ENCODE measurements at regions of chr14 and their contacts with region 1.

Region 1: DNA sequence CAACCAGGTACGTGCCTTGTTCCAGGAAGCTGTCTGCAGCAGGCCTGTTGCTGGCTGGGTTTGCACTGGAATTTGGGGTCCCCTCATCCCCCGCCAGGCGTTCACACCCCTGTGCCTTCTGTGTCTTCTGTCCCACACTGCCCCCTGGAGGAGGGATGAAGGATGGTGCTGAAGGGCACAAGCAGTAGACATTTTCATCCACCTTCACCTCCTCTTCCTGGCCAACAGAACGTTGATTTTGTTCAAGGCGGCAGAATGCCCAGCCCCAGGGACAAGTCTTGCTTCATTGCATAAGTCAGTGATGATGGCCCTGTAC is 122.1 kb downstream of the CALM1 start:
- DNase-seq: peak; percentile 85
- H3K4me3 Mint-ChIP-seq: no peak overlapping the region
- H3K27ac Mint-ChIP-seq: no peak overlapping the region
- H3K4me1 Mint-ChIP-seq: no peaks in the 10 kb centered on the region
- H3K27me3 Mint-ChIP-seq: no peaks in the 10 kb centered on the region

Region 2: GRCh38 chr14:90301668-90302090 is 217.2 kb before region 1 on chr14:
- intact Hi-C with region 1: loop called (anchors 2 kb)
- DNase-seq: no peak
- H3K4me3 Mint-ChIP-seq: no peak overlapping the region
- H3K27ac Mint-ChIP-seq: peak overlapping the region; percentile 6
- H3K4me1 Mint-ChIP-seq: peaks cover 12% of the 10 kb centered on the region
- H3K27me3 Mint-ChIP-seq: no peaks in the 10 kb centered on the region

Region 3: GRCh38 chr14:90368946-90369721 is 149.8 kb before region 1 on chr14:
- intact Hi-C with region 1: loop called (anchors 5 kb)
- DNase-seq: no peak
- H3K4me3 Mint-ChIP-seq: no peak overlapping the region
- H3K27ac Mint-ChIP-seq: no peak overlapping the region
- H3K4me1 Mint-ChIP-seq: no peaks in the 10 kb centered on the region
- H3K27me3 Mint-ChIP-seq: peaks cover 16% of the 10 kb centered on the region